ENCODE measurements at regions of chr11 and their contacts with region 1.

Region 1: GRCh38 chr11:122162095-122162494 is 46.1 kb upstream of the BLID start:
- DNase-seq: no peak
- ATAC-seq: peak; percentile 30 to 90 (median 78)
- H3K4me3 ChIP-seq: no peak overlapping the region
- H3K27ac ChIP-seq: no peak overlapping the region
- H3K4me1 ChIP-seq: peaks cover 10% of the 10 kb centered on the region
- H3K27me3 ChIP-seq: no peaks in the 10 kb centered on the region
- CTCF ChIP-seq: no peak

Region 2: DNA sequence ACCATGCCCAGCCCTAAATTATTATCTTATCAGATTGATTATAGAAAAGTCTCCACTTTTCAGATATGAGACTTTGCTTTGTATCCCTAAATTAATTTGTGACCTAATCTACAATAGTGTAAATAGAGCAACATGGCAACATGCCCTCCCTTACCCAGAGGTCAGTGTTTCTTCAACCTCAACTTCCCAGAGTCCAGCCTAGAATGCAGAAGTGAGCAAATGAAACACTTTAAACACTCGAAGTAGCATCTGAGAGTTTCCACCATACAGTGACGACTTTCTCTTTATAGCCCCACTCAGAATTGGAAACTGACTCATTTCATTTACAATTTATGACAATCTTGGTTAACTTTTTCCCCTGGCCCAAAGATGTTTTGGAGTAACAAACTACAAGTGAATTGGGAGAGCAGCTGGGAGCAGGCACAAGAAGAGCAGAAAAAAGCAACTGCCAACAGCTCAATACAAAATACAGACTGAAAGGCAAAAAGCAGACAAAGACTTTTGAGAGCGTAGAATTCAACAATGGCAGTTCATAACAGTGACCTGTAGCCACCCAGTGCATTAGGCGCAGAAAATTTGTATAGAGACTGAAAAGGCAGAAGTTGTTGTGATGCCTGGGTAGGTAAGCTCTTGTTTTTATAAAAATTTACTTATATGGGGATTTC is 35.9 kb before region 1 on chr11:
- intact Hi-C with region 1: loop called in 1 of 2 experiments (anchors 1 kb)
- DNase-seq: no peak
- ATAC-seq: no peak
- H3K4me3 ChIP-seq: no peak overlapping the region
- H3K27ac ChIP-seq: no peak overlapping the region
- H3K4me1 ChIP-seq: no peaks in the 10 kb centered on the region
- H3K27me3 ChIP-seq: no peaks in the 10 kb centered on the region
- CTCF ChIP-seq: no peak